Right cardiac atrium (tissue), 5 donors: ENCODE measurements at regions of chr15 and their contacts with region 1.

Region 1: GRCh38 chr15:82849556-82850512 is 40.4 kb downstream of the WHAMM start:
- DNase-seq: peak; percentile 75 to 89 (median 89)
- ATAC-seq: peak; percentile 92
- H3K4me3 ChIP-seq: no peak overlapping the region
- H3K27ac ChIP-seq: peak overlapping the region; percentile 5
- H3K4me1 ChIP-seq: no peaks in the 10 kb centered on the region
- H3K27me3 ChIP-seq: no peaks in the 10 kb centered on the region

Region 2: GRCh38 chr15:82933576-82933975 is 83.7 kb after region 1 on chr15:
- intact Hi-C with region 1: no loop called
- DNase-seq: no peak
- ATAC-seq: no peak
- H3K4me3 ChIP-seq: no peak overlapping the region
- H3K27ac ChIP-seq: no peak overlapping the region
- H3K4me1 ChIP-seq: peaks cover 2% of the 10 kb centered on the region
- H3K27me3 ChIP-seq: no peaks in the 10 kb centered on the region

Region 3: GRCh38 chr15:82999905-83000671 is 150.3 kb after region 1 on chr15:
- intact Hi-C with region 1: loop called in 3 of 4 experiments (anchors 2 to 10 kb)
- DNase-seq: no peak
- ATAC-seq: peak; percentile 83 to 84
- H3K4me3 ChIP-seq: no peak overlapping the region
- H3K27ac ChIP-seq: no peak overlapping the region
- H3K4me1 ChIP-seq: no peaks in the 10 kb centered on the region
- H3K27me3 ChIP-seq: no peaks in the 10 kb centered on the region

Region 4: GRCh38 chr15:83018436-83018835 is 168.6 kb after region 1 on chr15:
- intact Hi-C with region 1: no loop called
- DNase-seq: no peak
- ATAC-seq: no peak
- H3K4me3 ChIP-seq: no peak overlapping the region
- H3K27ac ChIP-seq: no peak overlapping the region
- H3K4me1 ChIP-seq: no peaks in the 10 kb centered on the region
- H3K27me3 ChIP-seq: no peaks in the 10 kb centered on the region

Region 5: GRCh38 chr15:83723216-83723615 is 873.4 kb after region 1 on chr15:
- intact Hi-C with region 1: no loop called
- DNase-seq: no peak
- ATAC-seq: peak in 1 of 2 donors; percentile 43
- H3K4me3 ChIP-seq: no peak overlapping the region
- H3K27ac ChIP-seq: no peak overlapping the region
- H3K4me1 ChIP-seq: no peaks in the 10 kb centered on the region
- H3K27me3 ChIP-seq: no peaks in the 10 kb centered on the region